ENCODE measurements at regions of chr12 and their contacts with region 1.

Region 1: DNA sequence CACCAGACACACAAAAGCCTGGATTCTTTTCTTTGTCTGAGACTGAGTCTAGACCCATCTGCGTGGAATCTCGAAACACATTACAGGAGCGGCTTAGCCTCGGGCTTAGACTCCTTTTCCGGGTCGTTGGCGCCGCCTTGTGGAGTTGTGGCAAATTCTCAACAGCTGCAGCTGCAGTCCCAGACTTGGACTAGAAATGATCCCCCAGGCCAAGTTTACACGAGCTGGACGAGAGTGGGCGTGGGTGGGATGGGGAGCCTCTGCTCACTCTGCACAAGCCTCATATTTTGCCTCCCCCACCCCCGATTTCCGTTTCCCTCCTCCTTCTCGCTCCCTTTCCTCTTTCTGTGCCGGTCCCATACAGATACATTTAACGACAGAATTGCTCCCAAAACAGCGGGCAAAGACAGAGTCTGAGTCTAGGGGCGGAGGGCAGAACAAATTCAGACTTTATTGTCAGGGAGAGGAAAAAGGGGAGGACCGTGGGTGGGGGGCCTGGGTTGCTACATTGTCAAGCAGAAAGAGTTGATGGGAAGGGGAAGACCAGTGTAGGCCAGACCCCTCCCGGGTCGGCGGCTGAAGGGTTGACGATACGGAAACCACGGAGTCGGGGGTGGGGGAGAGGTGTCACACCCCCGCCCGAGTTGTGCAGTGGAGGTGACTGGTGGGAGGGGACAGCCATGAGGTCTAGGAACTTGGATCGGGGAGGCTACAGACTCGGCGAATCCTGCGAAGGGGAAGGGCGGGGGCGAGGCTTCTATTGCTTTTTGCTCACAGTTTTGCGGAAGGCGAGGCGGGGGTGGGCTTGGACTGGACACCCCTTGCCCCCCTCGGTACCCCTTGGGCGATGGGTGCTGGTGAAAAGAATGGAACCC is 4.7 kb upstream of the GPR84 start:
- DNase-seq: peak; percentile 91 to 96 (median 95)
- ATAC-seq: peak; percentile 66 to 70
- H3K4me3 ChIP-seq: peak overlapping the region; percentile 53
- H3K27ac ChIP-seq: peak overlapping the region; percentile 7
- H3K4me1 ChIP-seq: peaks cover 4% of the 10 kb centered on the region
- H3K27me3 ChIP-seq: no peaks in the 10 kb centered on the region

Region 2: GRCh38 chr12:54017878-54018467 is 351.0 kb before region 1 on chr12:
- intact Hi-C with region 1: loop called in 1 of 4 experiments (anchors 10 kb)
- DNase-seq: peak; percentile 66 to 90 (median 86)
- ATAC-seq: peak; percentile 83 to 88
- H3K4me3 ChIP-seq: peak overlapping the region; percentile 53
- H3K27ac ChIP-seq: peak overlapping the region; percentile 20
- H3K4me1 ChIP-seq: no peaks in the 10 kb centered on the region
- H3K27me3 ChIP-seq: no peaks in the 10 kb centered on the region

Region 3: GRCh38 chr12:54214553-54215406 is 154.2 kb before region 1 on chr12:
- intact Hi-C with region 1: loop called in 3 of 4 experiments (anchors 5 to 10 kb)
- DNase-seq: peak; percentile 89 to 94 (median 92)
- ATAC-seq: peak; percentile 86
- H3K4me3 ChIP-seq: no peak overlapping the region
- H3K27ac ChIP-seq: no peak overlapping the region
- H3K4me1 ChIP-seq: peaks cover 5% of the 10 kb centered on the region
- H3K27me3 ChIP-seq: no peaks in the 10 kb centered on the region

Region 4: GRCh38 chr12:54279866-54280467 is 89.0 kb before region 1 on chr12 and contains the start of gene CBX5:
- intact Hi-C with region 1: loop called in 1 of 4 experiments (anchors 10 kb)
- DNase-seq: peak; percentile 99
- ATAC-seq: peak; percentile 80 to 82
- H3K4me3 ChIP-seq: peak within 1 kb of the TSS; percentile 92
- H3K27ac ChIP-seq: peak within 1 kb of the TSS; percentile 98
- H3K4me1 ChIP-seq: peaks cover 6% of the 10 kb centered on the region
- H3K27me3 ChIP-seq: no peaks in the 10 kb centered on the region
- total RNA-seq, gene CBX5: 55.1 to 68.2 (median 57.1) TPM

Region 5: DNA sequence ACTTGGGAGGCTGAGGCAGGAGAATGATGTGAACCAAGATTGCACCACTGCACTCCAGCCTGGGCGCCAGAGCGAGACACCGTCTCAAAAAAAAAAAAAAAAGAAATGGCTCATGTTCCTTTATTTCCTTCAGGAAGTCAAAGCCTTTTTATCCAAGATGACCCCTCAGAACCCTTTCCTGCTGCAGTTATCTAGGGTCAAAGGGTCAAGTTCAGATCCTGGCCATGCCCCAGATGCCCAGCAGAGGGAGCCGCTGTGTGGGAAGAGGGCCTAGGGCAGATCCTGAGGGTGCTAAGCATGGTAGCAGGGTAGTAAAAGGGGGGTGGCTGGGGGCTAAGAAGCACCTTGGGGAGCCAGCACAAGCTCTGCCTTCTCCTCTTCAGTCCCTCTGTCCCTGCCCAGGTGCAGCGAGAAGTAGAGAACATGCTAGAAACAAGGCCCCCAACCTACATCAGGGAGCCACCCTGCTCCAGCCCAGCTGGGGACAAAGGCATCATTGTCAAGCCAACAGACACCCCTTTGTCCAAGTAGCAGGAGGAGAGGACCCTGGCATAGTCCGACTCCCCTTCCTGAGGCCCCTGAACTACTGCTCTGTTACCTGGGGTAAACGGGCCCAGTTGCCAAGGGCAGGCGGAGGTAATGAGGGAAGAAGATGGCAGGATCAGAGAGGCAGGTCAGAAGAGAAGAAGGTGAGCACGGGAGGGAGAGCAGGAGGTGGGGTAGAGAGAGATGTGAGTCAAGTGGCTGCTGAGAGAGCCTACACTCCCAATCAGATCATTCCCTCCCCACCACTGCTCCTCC is 74.6 kb before region 1 on chr12:
- intact Hi-C with region 1: loop called in 2 of 4 experiments (anchors 10 kb)
- DNase-seq: peak; percentile 40 to 79 (median 71)
- ATAC-seq: peak; percentile 44 to 66
- H3K4me3 ChIP-seq: no peak overlapping the region
- H3K27ac ChIP-seq: no peak overlapping the region
- H3K4me1 ChIP-seq: no peaks in the 10 kb centered on the region
- H3K27me3 ChIP-seq: no peaks in the 10 kb centered on the region